HEK293 (cell line): ENCODE measurements at regions of chr9 and their contacts with region 1.

Region 1: GRCh38 chr9:115591584-115591984 is 473.6 kb upstream of the TNC start:
- H3K4me3 ChIP-seq: no peak overlapping the region
- H3K27ac ChIP-seq: peak overlapping the region; percentile 33; the same call in 1 of the 2 replicates
- H3K4me1 ChIP-seq: 0 out of 2 replicates have a peak, but pooled peaks cover 2% of the 10 kb centered on the region
- CTCF ChIP-seq: 0 out of 2 replicates have a peak, but pooled peaks have one; percentile 24

Region 2: GRCh38 chr9:115649991-115650472 is 58.4 kb after region 1 on chr9:
- CTCF ChIA-PET with region 1: interaction called, 18 read pairs
- POLR2A ChIA-PET with region 1: no interaction called
- H3K4me3 ChIP-seq: no peak overlapping the region
- H3K27ac ChIP-seq: no peak overlapping the region
- H3K4me1 ChIP-seq: no peaks in the 10 kb centered on the region
- CTCF ChIP-seq: no peak

Region 3: GRCh38 chr9:115883457-115884329 is 292.1 kb after region 1 on chr9:
- CTCF ChIA-PET with region 1: interaction called, 56 read pairs
- POLR2A ChIA-PET with region 1: no interaction called
- H3K4me3 ChIP-seq: no peak overlapping the region
- H3K27ac ChIP-seq: no peak overlapping the region
- H3K4me1 ChIP-seq: no peaks in the 10 kb centered on the region
- CTCF ChIP-seq: peak; percentile 36; the same call in 1 of the 2 replicates

Region 4: DNA sequence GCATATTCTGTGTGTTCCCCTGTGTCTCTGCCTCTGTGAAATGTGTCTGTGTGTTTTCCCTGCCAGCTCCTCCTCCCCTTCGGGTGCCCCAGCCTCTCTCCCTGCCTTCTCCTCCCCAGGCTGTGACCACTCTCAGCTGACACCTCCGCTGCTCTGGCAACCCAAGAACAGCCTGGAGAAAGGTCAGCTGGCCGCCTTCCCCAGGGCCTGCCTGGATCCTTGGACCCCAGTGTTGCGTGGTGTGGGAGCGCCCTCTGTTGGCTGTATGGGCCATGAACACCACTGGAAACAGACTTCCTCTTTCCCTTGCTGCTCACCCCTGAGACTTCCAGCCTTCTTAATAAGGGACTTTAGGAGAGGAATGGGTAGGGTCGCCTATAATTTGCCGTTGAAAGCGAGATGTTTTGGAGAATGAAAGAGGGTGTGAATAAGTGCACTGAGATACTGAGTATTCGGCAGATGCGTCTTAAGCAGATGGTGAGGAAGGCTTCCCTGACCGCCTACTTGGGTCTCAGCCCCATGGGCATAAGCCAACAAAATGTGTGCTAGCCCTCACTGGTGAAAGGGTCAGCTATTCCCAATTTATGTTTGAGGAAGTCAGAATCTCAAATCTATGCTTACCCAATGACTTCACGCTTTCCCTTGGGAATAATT is 980.6 kb after region 1 on chr9:
- CTCF ChIA-PET with region 1: interaction called, 71 read pairs
- POLR2A ChIA-PET with region 1: no interaction called
- H3K4me3 ChIP-seq: no peak overlapping the region
- H3K27ac ChIP-seq: no peak overlapping the region
- H3K4me1 ChIP-seq: peaks cover 4% of the 10 kb centered on the region
- CTCF ChIP-seq: peak; percentile 80